ENCODE measurements at regions of chr2 and their contacts with region 1.

Region 1: DNA sequence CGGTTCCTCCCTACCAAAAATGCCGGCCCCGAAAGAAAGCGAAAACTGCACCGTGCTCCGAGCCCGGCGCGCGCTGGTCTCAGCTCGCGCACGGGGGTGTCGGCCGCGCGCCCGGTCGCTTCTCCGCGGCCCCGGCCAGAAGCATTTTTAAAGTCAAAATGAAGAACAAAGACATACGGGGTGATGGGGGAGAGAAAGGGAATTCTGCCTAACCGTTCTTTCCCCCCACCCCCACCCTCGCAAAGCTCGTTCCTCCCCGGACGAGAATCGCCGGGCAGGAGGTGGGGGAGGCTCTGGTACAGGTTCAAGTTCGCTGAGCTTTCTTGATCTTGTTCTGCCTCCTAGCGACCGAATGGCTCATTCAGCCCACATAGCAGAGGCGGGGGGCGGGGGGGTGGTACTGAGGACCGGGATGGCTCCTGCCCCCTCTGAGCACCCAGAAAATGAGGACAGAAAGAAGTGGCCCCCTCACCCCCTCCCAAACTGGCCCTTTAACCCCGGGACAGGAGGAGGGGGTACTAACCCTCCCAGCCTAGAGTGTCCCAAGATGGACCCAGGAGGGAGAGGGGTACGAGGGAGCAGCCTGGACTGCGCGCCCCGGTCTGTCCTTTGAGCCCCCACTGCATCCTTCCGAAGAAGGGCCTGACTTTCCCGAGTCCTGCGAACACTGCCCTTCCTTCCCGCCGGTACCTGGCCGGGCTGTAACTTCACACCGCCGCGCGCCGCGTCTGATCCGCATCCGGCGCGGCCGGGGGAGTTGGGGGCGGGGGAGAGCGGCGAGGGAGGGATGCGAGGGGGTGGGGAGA is 3.1 kb downstream of the BCL11A start:
- DNase-seq: peak; percentile 83
- ATAC-seq: peak; percentile 84

Region 2: GRCh38 chr2:59301466-59302402 is 1248.6 kb before region 1 on chr2:
- intact Hi-C with region 1: loop called (anchors 10 kb)
- DNase-seq: no peak
- ATAC-seq: peak; percentile 76

Region 3: DNA sequence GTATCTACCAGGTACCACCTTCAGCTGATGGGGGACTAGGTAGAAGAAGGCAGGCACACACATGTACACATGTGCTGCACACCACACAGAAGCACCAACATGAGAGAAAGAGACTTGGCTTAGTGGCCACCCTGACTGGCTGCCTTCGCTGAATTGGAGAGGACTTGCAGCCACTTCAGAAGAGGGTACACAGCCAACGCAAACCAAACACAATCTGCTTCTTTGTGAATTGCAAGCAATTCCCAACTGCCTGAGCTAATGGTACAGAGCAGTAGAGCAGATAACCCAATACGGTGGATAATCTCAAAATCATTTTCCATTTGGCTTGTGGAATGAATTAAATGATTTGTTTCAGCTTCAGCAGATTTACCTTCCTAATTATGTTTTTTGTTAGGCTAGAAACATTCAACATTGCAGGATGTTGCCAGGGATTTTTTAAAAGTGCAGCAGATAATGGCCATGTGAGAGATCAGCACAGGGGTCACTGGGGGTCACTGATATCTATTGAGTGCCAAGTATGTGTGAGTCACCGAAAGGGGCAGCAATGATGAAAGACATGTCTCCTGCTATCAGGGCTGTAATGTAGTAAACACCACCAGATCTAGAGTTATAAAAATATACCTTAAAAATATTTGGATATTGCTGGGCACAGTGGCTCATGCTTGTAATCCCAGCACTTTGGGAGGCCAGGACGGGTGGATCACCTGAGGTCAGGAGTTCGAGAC is 649.5 kb before region 1 on chr2:
- intact Hi-C with region 1: loop called (anchors 5 kb)
- DNase-seq: no peak
- ATAC-seq: peak; percentile 68

Region 4: DNA sequence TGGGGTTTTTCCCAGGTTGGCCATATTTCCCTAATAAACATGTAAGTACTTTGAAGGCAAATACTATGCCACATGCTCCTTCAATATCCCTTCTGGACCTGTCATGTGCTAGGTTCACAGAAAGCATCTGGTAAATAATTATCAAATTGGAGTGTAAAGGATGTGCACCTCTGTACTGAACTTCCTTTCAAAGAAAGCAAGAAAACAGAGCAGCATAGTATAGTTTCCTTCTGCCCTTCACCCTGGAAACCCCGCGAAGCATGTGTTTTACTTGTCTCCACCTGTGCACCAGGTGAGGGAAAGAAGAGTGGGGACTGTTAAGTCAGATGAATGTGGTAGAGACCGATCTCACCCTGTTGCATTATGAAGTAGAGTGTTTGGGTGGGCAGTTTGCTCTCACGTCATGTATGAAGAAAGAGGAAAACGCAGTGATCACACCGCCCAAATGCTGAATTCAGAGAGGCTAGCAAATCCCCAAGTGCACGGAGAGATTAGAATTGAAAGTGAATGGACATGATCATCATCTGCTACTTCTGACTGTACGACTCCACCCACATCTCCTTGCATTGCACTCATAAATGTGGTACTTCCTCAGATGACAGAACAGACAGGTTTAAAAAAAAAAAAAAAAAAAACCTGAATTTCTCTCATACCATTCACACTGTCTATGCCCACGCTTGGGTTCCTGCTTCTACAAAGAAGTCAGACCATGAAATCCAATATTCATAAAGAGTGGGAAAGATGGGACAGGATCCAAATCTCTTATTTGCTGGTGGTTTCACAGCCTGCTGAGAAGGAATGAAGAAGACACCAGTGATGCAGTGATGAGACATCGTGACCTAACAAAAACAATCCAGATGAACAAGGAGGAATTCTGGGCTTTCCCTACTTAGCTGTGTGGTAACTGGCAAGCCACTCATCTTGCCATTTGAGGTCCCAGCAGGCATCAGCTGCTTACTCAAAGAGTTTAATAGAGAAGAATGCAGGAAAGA is 445.6 kb before region 1 on chr2:
- intact Hi-C with region 1: loop called (anchors 5 kb)
- DNase-seq: no peak
- ATAC-seq: no peak

Region 5: DNA sequence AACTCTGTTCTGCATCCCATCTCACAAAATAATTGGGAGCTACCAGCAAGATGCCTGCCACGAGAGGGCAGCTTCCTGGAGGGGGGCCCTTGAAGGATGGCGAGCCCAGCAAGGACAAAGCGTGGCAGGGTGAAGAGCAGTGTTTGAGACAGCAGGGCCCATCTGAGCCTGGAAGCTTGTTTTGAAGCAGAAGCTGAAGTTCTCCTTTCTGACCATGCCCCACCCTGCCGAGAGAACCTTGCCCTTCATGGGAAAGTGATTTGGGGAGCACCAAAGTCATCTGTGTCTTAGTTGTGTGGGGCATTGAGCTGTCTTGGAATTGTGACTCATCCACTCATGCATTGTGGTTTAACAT is 213.3 kb before region 1 on chr2:
- intact Hi-C with region 1: loop called (anchors 1 kb)
- DNase-seq: no peak
- ATAC-seq: peak; percentile 74

Measured in Right ventricle myocardium inferior (tissue), 1 donor.